GM12878 (cell line): ENCODE measurements at regions of chr4 and their contacts with region 1.

Region 1: GRCh38 chr4:21790438-21791029 is 158.0 kb downstream of the KCNIP4 start:
- DNase-seq: no peak
- ATAC-seq: peak; percentile 63
- H3K4me3 ChIP-seq: no peak overlapping the region
- H3K27ac ChIP-seq: no peak overlapping the region
- H3K4me1 ChIP-seq: no peaks in the 10 kb centered on the region
- H3K27me3 ChIP-seq: no peaks in the 10 kb centered on the region
- CTCF ChIP-seq: peak; percentile 17 to 39 (median 32); a peak in 3 of 6 replicates
- EP300 ChIP-seq: no peak
- POLR2A ChIP-seq: no peak
- RAD21 ChIP-seq: peak; percentile 47

Region 2: GRCh38 chr4:21678711-21679110 is 111.8 kb before region 1 on chr4:
- CTCF ChIA-PET with region 1: no interaction called
- POLR2A ChIA-PET with region 1: no interaction called
- RAD21 ChIA-PET with region 1: no interaction called
- SMC1A ChIA-PET with region 1: no interaction called
- in situ Hi-C with region 1: no loop called
- intact Hi-C with region 1: no loop called
- DNase-seq: no peak
- ATAC-seq: no peak
- H3K4me3 ChIP-seq: no peak overlapping the region
- H3K27ac ChIP-seq: no peak overlapping the region
- H3K4me1 ChIP-seq: no peaks in the 10 kb centered on the region
- H3K27me3 ChIP-seq: no peaks in the 10 kb centered on the region
- CTCF ChIP-seq: no peak
- EP300 ChIP-seq: no peak
- POLR2A ChIP-seq: no peak
- RAD21 ChIP-seq: no peak

Region 3: DNA sequence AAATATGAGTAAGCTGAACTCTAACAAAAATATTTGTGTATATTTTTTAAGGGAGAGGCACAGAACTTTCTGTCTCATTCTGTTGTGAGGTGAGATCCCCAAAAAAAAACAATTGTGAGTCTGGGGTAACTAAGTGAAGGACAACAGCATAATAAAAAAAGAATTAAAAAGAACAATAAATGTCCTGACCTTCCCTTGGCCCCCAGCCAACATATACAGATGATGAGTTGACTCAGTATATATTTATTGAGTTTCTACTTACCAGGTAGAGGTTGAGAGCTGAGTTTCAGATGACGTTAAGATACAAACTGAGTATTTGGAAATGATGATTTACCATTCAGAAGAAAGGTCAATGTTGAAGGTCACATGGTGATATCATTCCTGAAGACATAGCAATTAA is 81.5 kb before region 1 on chr4:
- CTCF ChIA-PET with region 1: no interaction called
- POLR2A ChIA-PET with region 1: no interaction called
- RAD21 ChIA-PET with region 1: no interaction called
- SMC1A ChIA-PET with region 1: no interaction called
- in situ Hi-C with region 1: no loop called
- intact Hi-C with region 1: no loop called
- DNase-seq: no peak
- ATAC-seq: no peak
- H3K4me3 ChIP-seq: no peak overlapping the region
- H3K27ac ChIP-seq: no peak overlapping the region
- H3K4me1 ChIP-seq: no peaks in the 10 kb centered on the region
- H3K27me3 ChIP-seq: no peaks in the 10 kb centered on the region
- CTCF ChIP-seq: no peak
- EP300 ChIP-seq: no peak
- POLR2A ChIP-seq: no peak
- RAD21 ChIP-seq: no peak

Region 4: GRCh38 chr4:21780158-21780557 is 10.4 kb before region 1 on chr4:
- CTCF ChIA-PET with region 1: interaction called, 21 read pairs
- POLR2A ChIA-PET with region 1: no interaction called
- RAD21 ChIA-PET with region 1: interaction called, 5 read pairs
- SMC1A ChIA-PET with region 1: interaction called, 3 read pairs
- in situ Hi-C with region 1: no loop called
- intact Hi-C with region 1: no loop called
- DNase-seq: no peak
- ATAC-seq: no peak
- H3K4me3 ChIP-seq: no peak overlapping the region
- H3K27ac ChIP-seq: no peak overlapping the region
- H3K4me1 ChIP-seq: no peaks in the 10 kb centered on the region
- H3K27me3 ChIP-seq: no peaks in the 10 kb centered on the region
- CTCF ChIP-seq: no peak
- EP300 ChIP-seq: no peak
- POLR2A ChIP-seq: no peak
- RAD21 ChIP-seq: no peak

Region 5: GRCh38 chr4:21811565-21811964 is 21.0 kb after region 1 on chr4:
- CTCF ChIA-PET with region 1: interaction called, 10 read pairs
- POLR2A ChIA-PET with region 1: no interaction called
- RAD21 ChIA-PET with region 1: interaction called, 5 read pairs
- SMC1A ChIA-PET with region 1: no interaction called
- in situ Hi-C with region 1: no loop called
- intact Hi-C with region 1: no loop called
- DNase-seq: no peak
- ATAC-seq: no peak
- H3K4me3 ChIP-seq: no peak overlapping the region
- H3K27ac ChIP-seq: no peak overlapping the region
- H3K4me1 ChIP-seq: no peaks in the 10 kb centered on the region
- H3K27me3 ChIP-seq: no peaks in the 10 kb centered on the region
- CTCF ChIP-seq: no peak
- EP300 ChIP-seq: no peak
- POLR2A ChIP-seq: no peak
- RAD21 ChIP-seq: no peak

Region 6: GRCh38 chr4:22384154-22384553 is 593.6 kb after region 1 on chr4:
- CTCF ChIA-PET with region 1: interaction called, 139 read pairs
- POLR2A ChIA-PET with region 1: interaction called, 3 read pairs
- RAD21 ChIA-PET with region 1: interaction called, 67 read pairs
- SMC1A ChIA-PET with region 1: interaction called, 72 read pairs
- in situ Hi-C with region 1: loop called (anchors 5 kb)
- intact Hi-C with region 1: loop called (anchors 1 kb)
- DNase-seq: no peak
- ATAC-seq: no peak
- H3K4me3 ChIP-seq: no peak overlapping the region
- H3K27ac ChIP-seq: no peak overlapping the region
- H3K4me1 ChIP-seq: no peaks in the 10 kb centered on the region
- H3K27me3 ChIP-seq: no peaks in the 10 kb centered on the region
- CTCF ChIP-seq: no peak
- EP300 ChIP-seq: no peak
- POLR2A ChIP-seq: no peak
- RAD21 ChIP-seq: no peak

Region 7: GRCh38 chr4:22688236-22688635 is 897.7 kb after region 1 on chr4:
- CTCF ChIA-PET with region 1: interaction called, 7 read pairs
- POLR2A ChIA-PET with region 1: interaction called, 5 read pairs
- RAD21 ChIA-PET with region 1: interaction called, 6 read pairs
- SMC1A ChIA-PET with region 1: no interaction called
- in situ Hi-C with region 1: loop called (anchors 5 kb)
- intact Hi-C with region 1: loop called (anchors 5 kb)
- DNase-seq: no peak
- ATAC-seq: no peak
- H3K4me3 ChIP-seq: no peak overlapping the region
- H3K27ac ChIP-seq: no peak overlapping the region
- H3K4me1 ChIP-seq: no peaks in the 10 kb centered on the region
- H3K27me3 ChIP-seq: no peaks in the 10 kb centered on the region
- CTCF ChIP-seq: no peak
- EP300 ChIP-seq: no peak
- POLR2A ChIP-seq: no peak
- RAD21 ChIP-seq: no peak